HEK293 (cell line): ENCODE measurements at regions of chr17 and their contacts with region 1.

Region 1: GRCh38 chr17:6843241-6843880 is 11.8 kb upstream of the TEKT1 start:
- H3K4me3 ChIP-seq: no peak overlapping the region
- H3K27ac ChIP-seq: no peak overlapping the region
- H3K4me1 ChIP-seq: no peaks in the 10 kb centered on the region
- CTCF ChIP-seq: no peak

Region 2: DNA sequence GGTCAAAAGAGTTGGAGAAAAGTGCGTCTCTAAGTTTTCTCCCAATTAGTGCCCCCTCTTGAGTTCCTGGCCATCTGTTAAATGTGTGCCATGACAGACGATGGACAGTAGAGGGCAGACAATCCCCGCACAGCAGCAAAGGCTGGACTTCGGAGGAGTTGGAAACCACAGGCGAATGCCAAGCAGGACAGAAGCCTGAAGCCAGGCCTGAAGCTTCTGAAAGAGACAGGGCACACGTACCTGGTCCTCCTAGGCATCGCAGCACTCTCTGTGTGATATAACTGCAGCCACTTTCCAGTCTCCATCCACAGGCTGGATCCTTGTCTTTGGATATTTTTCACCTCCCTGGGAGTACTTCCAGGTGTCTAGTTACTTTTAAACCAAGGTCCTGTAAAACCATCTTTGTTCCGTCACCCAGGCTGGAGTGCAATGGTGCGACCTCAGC is 177.3 kb before region 1 on chr17:
- CTCF ChIA-PET with region 1: interaction called, 43 read pairs
- POLR2A ChIA-PET with region 1: no interaction called
- H3K4me3 ChIP-seq: no peak overlapping the region
- H3K27ac ChIP-seq: no peak overlapping the region
- H3K4me1 ChIP-seq: no peaks in the 10 kb centered on the region
- CTCF ChIP-seq: peak; percentile 86

Region 3: GRCh38 chr17:6721744-6722143 is 121.6 kb before region 1 on chr17:
- CTCF ChIA-PET with region 1: no interaction called
- POLR2A ChIA-PET with region 1: no interaction called
- H3K4me3 ChIP-seq: no peak overlapping the region
- H3K27ac ChIP-seq: no peak overlapping the region
- H3K4me1 ChIP-seq: no peaks in the 10 kb centered on the region; the same call in 1 of the 2 replicates
- CTCF ChIP-seq: no peak

Region 4: DNA sequence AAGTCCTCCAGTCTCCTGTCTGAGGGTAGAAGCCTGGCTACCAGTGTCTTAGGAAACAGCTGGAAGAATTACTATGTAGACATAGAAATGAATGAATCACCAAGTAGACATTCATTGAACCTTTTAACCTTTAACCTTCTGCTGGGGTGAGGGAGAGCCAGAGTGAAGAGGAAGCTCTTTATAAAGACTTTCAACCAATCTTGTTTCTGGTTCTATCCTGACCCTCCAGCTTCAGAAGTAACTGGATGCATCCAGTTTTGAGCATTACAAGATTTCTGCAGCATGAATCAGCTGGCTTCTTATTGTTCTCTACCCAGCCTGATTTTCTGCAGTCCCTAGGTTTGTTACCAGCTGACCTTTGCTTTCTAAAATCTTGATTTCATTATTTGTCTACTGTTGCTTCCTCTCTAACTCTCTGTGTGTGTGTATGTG is 20.3 kb before region 1 on chr17:
- CTCF ChIA-PET with region 1: interaction called, 15 read pairs
- POLR2A ChIA-PET with region 1: no interaction called
- H3K4me3 ChIP-seq: no peak overlapping the region
- H3K27ac ChIP-seq: no peak overlapping the region
- H3K4me1 ChIP-seq: no peaks in the 10 kb centered on the region
- CTCF ChIP-seq: no peak

Region 5: DNA sequence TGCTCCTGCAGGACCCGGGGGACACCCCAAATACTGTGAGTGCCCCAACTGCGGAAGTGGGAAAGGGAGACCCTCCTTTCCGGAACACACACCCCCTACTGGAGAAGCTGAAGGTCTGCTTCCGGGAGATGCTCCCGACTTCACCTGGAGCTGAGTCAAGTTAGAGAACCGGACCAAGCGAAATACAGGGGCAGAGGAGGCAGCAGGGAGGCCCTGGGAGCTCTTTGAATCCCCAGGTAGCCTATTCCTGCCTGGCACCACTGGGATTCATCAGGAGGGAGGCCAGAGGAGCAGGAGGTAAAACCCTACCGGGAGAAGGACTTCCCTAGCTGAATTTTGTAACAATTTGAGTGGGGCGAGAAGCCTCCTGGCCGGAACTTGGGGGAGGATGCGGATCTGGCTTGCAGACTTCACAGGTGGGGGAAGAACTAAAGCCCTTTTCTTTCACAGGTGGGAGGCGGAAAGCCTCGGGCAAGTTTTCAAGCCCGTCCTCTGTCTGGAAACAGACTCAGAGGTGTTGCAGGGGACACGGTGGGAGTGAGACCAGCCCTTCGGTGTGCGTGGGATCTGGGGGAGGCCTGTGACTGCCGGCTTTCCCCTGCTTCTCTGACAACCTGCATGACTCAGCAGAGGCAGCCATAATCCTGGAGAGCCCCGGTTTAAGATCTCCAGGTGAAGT is 10.5 kb after region 1 on chr17:
- CTCF ChIA-PET with region 1: interaction called, 59 read pairs
- POLR2A ChIA-PET with region 1: interaction called, 8 read pairs
- H3K4me3 ChIP-seq: peak overlapping the region; percentile 62
- H3K27ac ChIP-seq: peak overlapping the region; percentile 78
- H3K4me1 ChIP-seq: no peaks in the 10 kb centered on the region
- CTCF ChIP-seq: peak; percentile 57

Region 6: GRCh38 chr17:6894206-6894528 is 50.8 kb after region 1 on chr17:
- CTCF ChIA-PET with region 1: interaction called, 16 read pairs
- POLR2A ChIA-PET with region 1: no interaction called
- H3K4me3 ChIP-seq: no peak overlapping the region
- H3K27ac ChIP-seq: no peak overlapping the region
- H3K4me1 ChIP-seq: no peaks in the 10 kb centered on the region
- CTCF ChIP-seq: no peak

Region 7: DNA sequence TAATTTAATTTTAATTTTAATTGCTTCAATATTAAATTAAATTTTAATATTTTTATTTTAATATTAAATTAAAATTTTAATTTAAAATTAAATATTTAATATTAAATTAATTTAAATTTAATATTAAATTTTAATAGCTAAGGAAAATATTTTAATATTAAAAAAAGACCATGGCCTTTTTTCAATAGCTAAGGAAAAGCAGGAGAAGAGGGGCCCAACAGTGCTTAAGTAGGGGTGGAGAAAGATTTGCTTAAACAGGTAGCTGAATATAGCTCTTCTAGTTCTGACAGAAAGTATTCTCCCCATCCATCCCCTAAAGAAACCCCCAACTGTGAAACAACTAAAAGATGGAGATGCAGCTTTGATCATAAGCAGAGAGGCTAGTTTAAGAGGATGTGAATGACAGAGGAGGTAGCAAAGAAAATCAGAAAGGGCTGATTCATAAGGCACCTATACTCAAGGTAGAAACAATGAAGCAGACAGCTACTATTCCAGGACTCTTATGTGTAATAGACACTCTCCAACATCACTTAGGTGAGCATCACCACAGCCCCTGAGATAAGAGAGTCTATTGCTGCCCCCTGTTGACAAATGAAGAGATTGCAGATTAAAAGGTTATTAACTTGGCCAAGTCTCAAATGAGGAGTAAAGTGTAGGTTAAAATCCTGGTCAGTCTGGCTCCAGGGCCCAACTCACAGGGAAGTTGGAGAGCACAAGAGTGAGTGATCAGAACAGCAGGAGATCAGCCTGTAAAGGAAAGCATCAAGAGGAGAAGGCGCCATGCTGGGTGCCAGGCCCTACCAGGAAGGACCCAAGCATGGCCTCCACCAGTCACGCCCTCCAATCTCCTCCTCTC is 161.3 kb after region 1 on chr17:
- CTCF ChIA-PET with region 1: interaction called, 169 read pairs
- POLR2A ChIA-PET with region 1: no interaction called
- H3K4me3 ChIP-seq: no peak overlapping the region
- H3K27ac ChIP-seq: no peak overlapping the region
- H3K4me1 ChIP-seq: no peaks in the 10 kb centered on the region
- CTCF ChIP-seq: peak; percentile 58